A549 (cell line): ENCODE measurements at regions of chr5 and their contacts with region 1.

Region 1: GRCh38 chr5:17189381-17190036 is 27.9 kb upstream of the BASP1 start:
- DNase-seq: peak; percentile 49 to 83
- ATAC-seq: peak; percentile 64 to 79
- H3K4me3 ChIP-seq: no peak overlapping the region
- H3K27ac ChIP-seq: peak overlapping the region; percentile 8 to 75; a peak in 5 of 6 replicates
- H3K4me1 ChIP-seq: peaks cover 51% of the 10 kb centered on the region
- CTCF ChIP-seq: peak; percentile 91
- EP300 ChIP-seq: no peak
- POLR2A ChIP-seq: no peak
- RAD21 ChIP-seq: peak; percentile 86 to 95

Region 2: DNA sequence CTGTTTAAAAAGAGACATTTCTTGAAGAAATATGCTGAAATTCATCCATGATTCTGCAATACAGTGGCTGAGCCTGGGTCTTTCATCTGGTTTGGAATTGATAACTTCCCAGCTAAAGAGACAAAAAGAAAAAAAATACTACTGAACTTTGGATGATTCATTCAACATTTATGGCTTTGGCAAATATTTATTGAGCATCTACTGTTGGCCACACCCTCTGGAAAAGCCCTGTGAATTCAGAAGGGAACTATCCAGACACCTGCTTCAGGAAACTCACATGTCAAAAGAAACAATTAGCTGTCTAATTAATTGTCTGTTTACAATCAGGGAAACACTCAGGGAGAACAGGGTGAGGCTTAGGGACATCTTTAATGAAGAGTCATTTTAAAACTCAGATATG is 706.1 kb before region 1 on chr5:
- CTCF ChIA-PET with region 1: interaction called, 16 read pairs
- POLR2A ChIA-PET with region 1: no interaction called
- DNase-seq: peak in 1 of 2 experiments; percentile 21
- ATAC-seq: peak in 1 of 2 experiments; percentile 40; a peak in 2 of 6 replicates
- H3K4me3 ChIP-seq: no peak overlapping the region
- H3K27ac ChIP-seq: no peak overlapping the region
- H3K4me1 ChIP-seq: peaks cover 14% of the 10 kb centered on the region
- CTCF ChIP-seq: no peak
- EP300 ChIP-seq: no peak
- POLR2A ChIP-seq: no peak
- RAD21 ChIP-seq: no peak

Region 3: GRCh38 chr5:16736158-16736995 is 453.1 kb before region 1 on chr5:
- CTCF ChIA-PET with region 1: interaction called, 12 read pairs
- POLR2A ChIA-PET with region 1: no interaction called
- DNase-seq: no peak
- ATAC-seq: peak in 1 of 2 experiments; percentile 16; a peak in 1 of 6 replicates
- H3K4me3 ChIP-seq: no peak overlapping the region
- H3K27ac ChIP-seq: peak overlapping the region; percentile 24 to 63
- H3K4me1 ChIP-seq: peaks cover 15% of the 10 kb centered on the region
- CTCF ChIP-seq: no peak
- EP300 ChIP-seq: no peak
- POLR2A ChIP-seq: no peak
- RAD21 ChIP-seq: no peak

Region 4: DNA sequence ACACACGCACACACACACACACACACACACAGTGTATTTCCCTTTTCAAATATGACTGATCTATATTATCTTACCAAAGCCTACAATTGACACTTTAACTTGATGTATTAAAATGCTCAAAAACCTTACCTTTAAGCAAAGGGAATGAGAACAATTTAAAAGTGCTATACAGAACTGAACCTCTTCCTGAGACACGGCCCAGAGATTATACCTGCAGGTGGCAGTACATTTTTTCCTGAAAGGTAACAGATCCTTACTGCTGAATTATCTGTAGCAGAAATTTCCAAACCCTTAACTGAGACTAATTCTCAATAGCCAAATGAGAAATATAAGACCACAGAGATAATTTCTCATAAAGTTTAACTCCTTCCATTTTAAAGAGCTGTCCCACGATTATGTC is 344.6 kb before region 1 on chr5:
- CTCF ChIA-PET with region 1: interaction called, 10 read pairs
- POLR2A ChIA-PET with region 1: no interaction called
- DNase-seq: no peak
- ATAC-seq: no peak
- H3K4me3 ChIP-seq: no peak overlapping the region
- H3K27ac ChIP-seq: no peak overlapping the region
- H3K4me1 ChIP-seq: peaks cover 32% of the 10 kb centered on the region
- CTCF ChIP-seq: peak; percentile 37; the same call in 2 of the 3 replicates
- EP300 ChIP-seq: no peak
- POLR2A ChIP-seq: no peak
- RAD21 ChIP-seq: peak; percentile 25 to 38; a peak in 4 of 5 replicates

Region 5: GRCh38 chr5:16909464-16909863 is 280.0 kb before region 1 on chr5:
- CTCF ChIA-PET with region 1: interaction called, 13 read pairs
- POLR2A ChIA-PET with region 1: no interaction called
- DNase-seq: peak in 1 of 2 experiments; percentile 47
- ATAC-seq: no peak; a peak in 1 of 6 replicates
- H3K4me3 ChIP-seq: no peak overlapping the region
- H3K27ac ChIP-seq: peak overlapping the region in 1 of 2 experiments; percentile 47; a peak in 3 of 6 replicates
- H3K4me1 ChIP-seq: peaks cover 86% of the 10 kb centered on the region
- CTCF ChIP-seq: no peak
- EP300 ChIP-seq: no peak
- POLR2A ChIP-seq: no peak
- RAD21 ChIP-seq: no peak

Region 6: GRCh38 chr5:17056056-17056690 is 133.3 kb before region 1 on chr5:
- CTCF ChIA-PET with region 1: interaction called, 26 read pairs
- POLR2A ChIA-PET with region 1: no interaction called
- DNase-seq: peak in 1 of 2 experiments; percentile 49
- ATAC-seq: peak; percentile 67 to 71
- H3K4me3 ChIP-seq: no peak overlapping the region
- H3K27ac ChIP-seq: peak overlapping the region; percentile 62 to 81
- H3K4me1 ChIP-seq: peaks cover 37% of the 10 kb centered on the region
- CTCF ChIP-seq: no peak
- EP300 ChIP-seq: peak in 1 of 2 experiments; percentile 16; a peak in 1 of 5 replicates
- POLR2A ChIP-seq: no peak
- RAD21 ChIP-seq: 0 out of 5 replicates have a peak, but pooled peaks of 1 of the 2 experiments have one; percentile 16

Region 7: DNA sequence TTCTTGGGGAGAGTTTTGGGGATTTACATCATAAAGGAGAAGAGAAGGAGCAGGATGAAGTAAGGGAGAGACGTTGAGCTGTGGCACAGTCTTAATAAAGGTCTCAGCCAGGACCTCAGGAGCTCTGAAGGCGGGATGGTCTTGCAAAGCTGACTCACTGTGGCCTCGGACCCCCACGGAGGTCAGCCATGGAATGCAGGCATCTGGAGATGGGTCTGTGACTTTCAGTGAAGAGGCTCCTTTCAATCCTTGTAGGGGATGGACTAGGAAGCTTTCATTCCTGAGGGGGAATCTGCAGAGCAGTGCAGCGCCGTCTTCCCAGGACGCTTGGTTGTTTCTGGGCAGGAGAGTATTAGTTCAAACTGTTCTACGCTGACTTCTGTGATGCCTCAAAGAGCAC is 37.8 kb before region 1 on chr5:
- CTCF ChIA-PET with region 1: interaction called, 28 read pairs
- POLR2A ChIA-PET with region 1: no interaction called
- DNase-seq: no peak
- ATAC-seq: no peak; a peak in 1 of 6 replicates
- H3K4me3 ChIP-seq: no peak overlapping the region
- H3K27ac ChIP-seq: peak overlapping the region in 1 of 2 experiments; percentile 45; a peak in 1 of 6 replicates
- H3K4me1 ChIP-seq: peaks cover 12% of the 10 kb centered on the region
- CTCF ChIP-seq: no peak
- EP300 ChIP-seq: no peak
- POLR2A ChIP-seq: no peak
- RAD21 ChIP-seq: no peak